Activated CD4-positive, alpha-beta memory T cell treated with anti-CD3 and anti-CD28 coated beads, Interleukin-2, amount 10 ng/mL, durations not matched to agents 7 days and 5 days (primary cell): ENCODE measurements at regions of chr5 and their contacts with region 1.

Region 1: GRCh38 chr5:134527146-134527960 is 1.9 kb downstream of the JADE2 start:
- DNase-seq: peak; percentile 74
- H3K4me3 Mint-ChIP-seq: peak overlapping the region; percentile 93
- H3K27ac Mint-ChIP-seq: peak overlapping the region; percentile 89
- H3K4me1 Mint-ChIP-seq: peaks cover 37% of the 10 kb centered on the region
- H3K27me3 Mint-ChIP-seq: peaks cover 5% of the 10 kb centered on the region

Region 2: DNA sequence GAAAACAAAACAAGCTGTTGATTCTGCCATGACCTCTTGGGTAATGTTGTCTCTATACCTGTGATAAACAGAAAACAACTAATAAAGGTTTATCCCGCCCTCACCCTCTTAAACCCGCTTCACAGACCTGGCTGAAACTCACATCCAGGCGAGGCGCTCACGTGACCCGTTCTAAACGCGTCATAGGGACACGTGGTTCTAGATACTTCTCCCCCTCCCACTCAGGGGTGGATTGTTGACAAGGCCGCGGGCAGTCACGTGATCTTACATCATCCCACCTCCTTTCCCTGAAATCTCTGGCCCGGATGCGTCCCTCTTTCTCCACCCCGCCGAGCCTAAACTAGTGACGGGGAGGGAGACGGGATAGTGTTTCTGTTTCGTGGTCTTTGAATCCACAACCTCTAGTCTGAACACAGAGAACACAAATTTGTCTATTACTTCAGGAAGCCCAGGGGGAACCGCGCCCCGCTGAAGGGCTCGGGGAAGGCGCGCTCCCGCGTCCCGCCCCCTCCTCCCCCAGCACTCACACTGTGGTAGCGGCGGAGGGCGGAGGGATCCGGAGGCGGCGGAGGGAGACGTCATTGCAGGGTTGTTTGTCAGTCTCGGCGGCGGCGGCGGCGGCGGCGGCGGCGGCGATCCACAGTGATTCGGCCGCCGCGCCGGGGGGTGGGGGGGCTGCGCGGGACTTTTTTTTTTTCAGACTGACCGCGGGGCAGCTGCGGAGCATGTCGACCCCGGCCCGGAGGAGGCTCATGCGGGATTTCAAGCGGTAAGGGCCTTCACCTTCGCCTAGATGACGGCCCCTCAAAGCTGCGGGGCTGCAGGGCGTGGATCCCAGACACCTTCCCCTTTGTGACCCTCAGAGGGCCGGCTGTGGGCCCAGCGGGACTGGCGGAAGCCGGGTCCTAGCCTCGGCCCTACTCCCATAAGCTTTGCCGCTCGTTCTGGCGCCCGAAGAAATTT is 156.2 kb before region 1 on chr5 and contains the start of gene UBE2B:
- CTCF ChIA-PET with region 1: interaction called, 14 read pairs
- POLR2A ChIA-PET with region 1: interaction called, 67 read pairs
- DNase-seq: peak; percentile 98
- H3K4me3 Mint-ChIP-seq: peak within 1 kb of the TSS; percentile 97
- H3K27ac Mint-ChIP-seq: peak within 1 kb of the TSS; percentile 98
- H3K4me1 Mint-ChIP-seq: peaks cover 46% of the 10 kb centered on the region
- H3K27me3 Mint-ChIP-seq: peaks cover 2% of the 10 kb centered on the region
- total RNA-seq, gene UBE2B: 115 to 116 TPM

Region 3: DNA sequence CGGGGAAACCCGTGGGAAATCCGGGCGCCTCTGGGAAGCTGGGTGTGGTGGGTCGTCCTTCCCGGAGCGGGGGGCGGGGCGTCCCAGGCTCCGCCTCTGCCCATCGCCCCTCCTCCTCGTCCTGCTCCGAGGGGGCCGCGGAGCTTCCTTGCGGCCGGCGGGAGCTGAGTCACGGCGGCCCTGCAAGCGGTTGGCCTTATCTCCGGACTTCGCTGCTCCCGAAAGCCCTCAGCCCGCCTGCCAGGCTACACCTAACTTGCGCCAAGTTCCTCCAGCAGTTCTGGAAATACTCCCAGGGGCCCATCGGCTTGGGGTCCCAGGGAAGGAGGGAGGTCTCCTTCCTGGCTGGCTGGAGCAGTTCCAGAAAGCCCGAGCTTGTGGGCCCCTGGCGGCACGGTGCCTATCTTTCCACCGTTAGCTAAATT is 61.5 kb before region 1 on chr5:
- CTCF ChIA-PET with region 1: interaction called, 5 read pairs
- POLR2A ChIA-PET with region 1: interaction called, 14 read pairs
- DNase-seq: peak; percentile 67
- H3K4me3 Mint-ChIP-seq: peak overlapping the region; percentile 72
- H3K27ac Mint-ChIP-seq: peak overlapping the region; percentile 68
- H3K4me1 Mint-ChIP-seq: peaks cover 15% of the 10 kb centered on the region
- H3K27me3 Mint-ChIP-seq: peaks cover 4% of the 10 kb centered on the region

Region 4: GRCh38 chr5:134511788-134512650 is 15.3 kb before region 1 on chr5:
- CTCF ChIA-PET with region 1: interaction called, 8 read pairs
- POLR2A ChIA-PET with region 1: interaction called, 82 read pairs
- DNase-seq: no peak
- H3K4me3 Mint-ChIP-seq: no peak overlapping the region
- H3K27ac Mint-ChIP-seq: no peak overlapping the region
- H3K4me1 Mint-ChIP-seq: peaks cover 16% of the 10 kb centered on the region
- H3K27me3 Mint-ChIP-seq: no peaks in the 10 kb centered on the region

Region 5: DNA sequence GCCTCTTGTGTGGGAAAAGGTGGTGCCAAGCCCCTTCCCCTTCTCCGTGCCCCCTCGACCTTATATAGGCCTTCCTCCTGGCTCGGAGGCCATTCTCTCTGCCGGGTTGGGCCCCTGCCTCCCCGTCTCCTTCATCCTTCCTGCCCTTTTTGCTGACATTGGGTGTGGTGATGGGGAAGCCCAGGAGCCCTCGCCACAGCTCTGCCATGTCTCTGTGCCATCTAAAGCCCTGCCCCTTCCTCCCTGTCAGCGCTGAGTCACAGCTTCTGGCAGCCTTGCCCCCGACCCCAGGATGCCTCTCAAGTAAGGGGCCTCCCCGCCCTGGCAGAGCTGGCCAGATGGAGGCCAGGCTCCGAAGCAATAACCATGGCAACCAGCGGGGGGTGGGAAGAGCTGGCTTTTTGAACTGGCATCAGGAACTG is 28.5 kb after region 1 on chr5:
- CTCF ChIA-PET with region 1: interaction called, 14 read pairs
- POLR2A ChIA-PET with region 1: interaction called, 31 read pairs
- DNase-seq: peak; percentile 89
- H3K4me3 Mint-ChIP-seq: peak overlapping the region; percentile 35
- H3K27ac Mint-ChIP-seq: peak overlapping the region; percentile 90
- H3K4me1 Mint-ChIP-seq: peaks cover 33% of the 10 kb centered on the region
- H3K27me3 Mint-ChIP-seq: no peaks in the 10 kb centered on the region

Region 6: DNA sequence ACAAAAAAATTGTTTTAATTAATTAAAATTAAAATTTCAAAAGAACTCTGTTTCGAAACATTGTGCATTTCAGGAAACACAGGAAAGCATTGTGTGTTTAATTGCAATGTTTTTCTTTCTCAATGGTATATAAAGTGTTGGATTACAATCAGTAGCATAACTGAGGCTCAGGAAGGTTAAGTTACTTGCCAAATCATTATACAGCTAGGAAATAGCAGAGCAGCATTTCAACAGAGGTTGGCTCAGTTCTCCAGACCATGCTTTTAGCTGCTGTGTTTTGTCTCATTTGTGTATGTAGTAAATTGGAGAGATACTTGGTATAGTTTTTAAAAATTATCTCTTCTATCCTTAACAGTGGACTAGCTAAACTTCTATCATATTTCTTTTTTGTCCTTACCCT is 180.9 kb after region 1 on chr5:
- CTCF ChIA-PET with region 1: no interaction called
- POLR2A ChIA-PET with region 1: no interaction called
- DNase-seq: no peak
- H3K4me3 Mint-ChIP-seq: no peak overlapping the region
- H3K27ac Mint-ChIP-seq: no peak overlapping the region
- H3K4me1 Mint-ChIP-seq: no peaks in the 10 kb centered on the region
- H3K27me3 Mint-ChIP-seq: no peaks in the 10 kb centered on the region